Right ventricle myocardium superior (tissue), 1 donor: ENCODE measurements at regions of chr10 and their contacts with region 1.

Region 1: GRCh38 chr10:102917962-102918816 is at the start of gene CNNM2:
- DNase-seq: peak; percentile 100
- ATAC-seq: peak; percentile 98
- total RNA-seq, gene CNNM2: 2.6 TPM

Region 2: GRCh38 chr10:103069453-103070331 is 151.5 kb after region 1 on chr10:
- intact Hi-C with region 1: loop called (anchors 5 kb)
- DNase-seq: peak; percentile 68
- ATAC-seq: peak; percentile 84

Region 3: DNA sequence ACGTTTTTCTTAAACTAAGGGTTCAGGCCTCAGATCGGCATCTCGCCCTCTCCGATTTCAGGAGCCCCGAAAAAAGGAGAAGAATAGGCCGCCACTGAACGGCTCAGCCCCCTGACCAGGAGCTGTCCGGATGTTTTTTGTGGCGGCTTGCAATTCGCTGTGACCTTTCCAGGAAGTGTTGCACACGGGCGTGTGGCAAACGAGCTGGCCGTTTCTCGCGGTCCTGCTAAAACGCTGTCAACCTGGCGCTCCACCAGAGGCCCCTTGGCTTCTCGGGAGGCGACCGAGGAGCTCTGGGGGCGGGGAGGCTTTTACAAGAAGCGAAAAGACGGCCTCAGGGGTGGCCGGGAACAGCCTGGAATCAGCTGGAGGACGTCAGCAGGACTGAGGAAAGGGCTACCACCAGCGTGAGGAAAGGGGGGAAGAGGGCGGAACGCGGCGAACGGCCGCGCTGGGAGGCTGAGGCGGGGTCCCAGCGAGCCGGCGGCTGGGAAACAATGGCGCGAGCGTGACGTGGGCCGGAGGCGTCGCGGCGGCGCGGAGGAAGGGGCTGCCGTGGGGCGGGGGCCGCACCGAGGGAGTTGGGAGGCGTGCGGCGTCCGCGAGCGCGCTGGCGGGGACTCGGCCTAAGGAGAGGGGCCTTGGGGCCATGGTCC is 274.4 kb after region 1 on chr10:
- intact Hi-C with region 1: loop called (anchors 5 kb)
- DNase-seq: peak; percentile 92
- ATAC-seq: peak; percentile 77

Region 4: DNA sequence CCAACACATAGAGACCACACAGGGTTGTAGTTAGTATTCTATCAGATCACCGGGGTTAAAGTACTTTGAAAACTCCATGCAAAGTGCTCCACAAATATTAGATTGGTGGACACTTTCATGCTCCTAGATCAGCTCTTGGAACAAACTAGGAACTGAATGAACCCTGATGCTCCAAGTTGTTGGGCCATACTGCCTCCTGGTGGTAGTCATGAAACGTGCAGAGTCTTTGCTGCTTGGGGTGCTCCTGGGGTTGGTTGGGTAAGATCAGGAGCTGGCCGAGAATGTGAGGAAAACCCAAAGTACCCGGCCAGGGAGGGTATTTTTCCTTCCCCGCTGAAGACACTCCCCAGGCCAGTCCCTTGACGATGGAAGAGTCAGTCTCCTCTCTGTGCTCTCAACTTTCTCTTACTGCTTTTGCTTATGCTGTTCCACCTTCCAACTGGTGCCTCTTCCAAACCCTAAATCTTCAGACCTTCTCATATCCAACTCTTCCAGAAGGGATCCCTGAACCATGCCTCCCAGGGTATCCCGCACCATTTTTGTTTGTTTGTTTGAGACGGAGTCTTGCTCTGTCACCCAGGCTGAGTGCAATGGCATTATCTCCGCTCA is 326.6 kb after region 1 on chr10:
- intact Hi-C with region 1: loop called (anchors 2 kb)
- DNase-seq: peak; percentile 71
- ATAC-seq: peak; percentile 94